ENCODE measurements at regions of chr17 and their contacts with region 1.

Region 1: DNA sequence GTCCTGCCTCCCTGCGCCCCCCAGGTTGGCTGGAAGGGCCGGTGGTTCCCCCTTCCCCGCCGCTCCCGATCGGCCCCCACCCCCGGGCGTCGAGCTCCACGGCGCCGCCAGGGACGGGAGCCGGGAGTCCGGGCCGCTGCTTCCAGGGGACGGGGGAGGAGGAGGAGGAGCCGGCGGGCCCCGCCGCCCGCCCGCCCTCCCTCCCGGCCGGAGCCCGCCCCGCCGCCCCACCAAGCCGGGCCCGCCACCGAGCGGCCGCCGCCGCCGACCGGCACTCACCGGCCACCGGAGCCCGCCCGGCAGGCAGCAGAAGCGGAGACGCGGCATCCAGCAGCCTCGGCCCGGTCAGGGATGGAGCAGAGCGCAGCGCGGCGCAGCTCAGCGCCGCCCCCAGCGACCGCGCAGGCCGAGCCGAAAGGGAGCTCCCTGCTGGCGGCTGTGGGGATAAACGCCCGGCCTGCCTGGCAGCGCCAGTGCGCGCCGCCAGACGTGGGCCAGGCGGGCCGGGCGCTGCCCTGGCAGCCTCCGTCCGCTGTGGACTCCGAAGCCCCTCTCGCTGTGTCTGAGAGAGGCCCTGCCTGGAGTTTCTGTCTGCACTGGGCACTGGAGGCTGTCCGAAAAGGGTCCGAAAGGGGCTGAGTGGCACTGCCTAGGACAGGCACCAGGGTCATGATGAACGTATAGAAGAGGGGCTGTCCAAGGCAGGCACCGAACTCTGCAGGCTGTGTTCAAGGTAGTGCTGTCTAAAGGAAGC is at the start of gene MYO18A:
- DNase-seq: peak; percentile 83
- ATAC-seq: peak; percentile 95
- H3K4me3 Mint-ChIP-seq: peak within 1 kb of the TSS; percentile 58
- H3K27ac Mint-ChIP-seq: no peak within 1 kb of the TSS
- H3K4me1 Mint-ChIP-seq: peaks cover 31% of the 10 kb centered on the region
- H3K27me3 Mint-ChIP-seq: no peaks in the 10 kb centered on the region
- CTCF ChIP-seq: peak; percentile 86
- total RNA-seq, gene MYO18A: 27.5 to 29.4 TPM

Region 2: DNA sequence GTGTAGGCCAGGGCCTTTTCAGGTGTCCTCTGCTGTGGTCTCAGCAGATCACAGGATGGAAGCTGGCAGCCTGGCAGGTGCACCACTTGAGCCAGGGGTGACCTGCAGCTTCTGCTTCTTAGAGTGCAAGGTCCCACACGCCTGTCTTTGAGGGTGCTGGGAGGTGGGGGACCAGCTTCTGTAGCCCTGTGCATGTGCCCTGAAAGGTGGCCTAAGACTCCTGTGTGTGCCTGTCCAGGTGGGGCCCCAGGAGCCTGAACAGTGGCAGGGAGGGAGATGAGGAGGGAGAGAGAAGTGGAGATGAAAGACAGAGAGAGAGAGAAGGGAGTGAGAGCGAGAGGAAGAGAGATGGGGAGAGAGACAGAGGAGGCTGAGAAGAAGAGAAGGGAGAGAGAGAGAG is 1503.0 kb before region 1 on chr17:
- CTCF ChIA-PET with region 1: no interaction called
- POLR2A ChIA-PET with region 1: no interaction called
- intact Hi-C with region 1: no loop called
- DNase-seq: no peak
- ATAC-seq: no peak
- H3K4me3 Mint-ChIP-seq: no peak overlapping the region
- H3K27ac Mint-ChIP-seq: no peak overlapping the region
- H3K4me1 Mint-ChIP-seq: no peaks in the 10 kb centered on the region
- H3K27me3 Mint-ChIP-seq: no peaks in the 10 kb centered on the region
- CTCF ChIP-seq: no peak

Region 3: GRCh38 chr17:29089601-29090044 is 90.6 kb before region 1 on chr17:
- CTCF ChIA-PET with region 1: no interaction called
- POLR2A ChIA-PET with region 1: no interaction called
- intact Hi-C with region 1: no loop called
- DNase-seq: no peak
- ATAC-seq: no peak
- H3K4me3 Mint-ChIP-seq: no peak overlapping the region
- H3K27ac Mint-ChIP-seq: no peak overlapping the region
- H3K4me1 Mint-ChIP-seq: no peaks in the 10 kb centered on the region
- H3K27me3 Mint-ChIP-seq: no peaks in the 10 kb centered on the region
- CTCF ChIP-seq: no peak

Region 4: GRCh38 chr17:29124117-29124924 is 55.9 kb before region 1 on chr17:
- CTCF ChIA-PET with region 1: interaction called, 38 read pairs
- POLR2A ChIA-PET with region 1: interaction called, 5 read pairs
- intact Hi-C with region 1: no loop called
- DNase-seq: peak; percentile 55
- ATAC-seq: peak; percentile 97
- H3K4me3 Mint-ChIP-seq: no peak overlapping the region
- H3K27ac Mint-ChIP-seq: no peak overlapping the region
- H3K4me1 Mint-ChIP-seq: no peaks in the 10 kb centered on the region
- H3K27me3 Mint-ChIP-seq: no peaks in the 10 kb centered on the region
- CTCF ChIP-seq: peak; percentile 76

Region 5: DNA sequence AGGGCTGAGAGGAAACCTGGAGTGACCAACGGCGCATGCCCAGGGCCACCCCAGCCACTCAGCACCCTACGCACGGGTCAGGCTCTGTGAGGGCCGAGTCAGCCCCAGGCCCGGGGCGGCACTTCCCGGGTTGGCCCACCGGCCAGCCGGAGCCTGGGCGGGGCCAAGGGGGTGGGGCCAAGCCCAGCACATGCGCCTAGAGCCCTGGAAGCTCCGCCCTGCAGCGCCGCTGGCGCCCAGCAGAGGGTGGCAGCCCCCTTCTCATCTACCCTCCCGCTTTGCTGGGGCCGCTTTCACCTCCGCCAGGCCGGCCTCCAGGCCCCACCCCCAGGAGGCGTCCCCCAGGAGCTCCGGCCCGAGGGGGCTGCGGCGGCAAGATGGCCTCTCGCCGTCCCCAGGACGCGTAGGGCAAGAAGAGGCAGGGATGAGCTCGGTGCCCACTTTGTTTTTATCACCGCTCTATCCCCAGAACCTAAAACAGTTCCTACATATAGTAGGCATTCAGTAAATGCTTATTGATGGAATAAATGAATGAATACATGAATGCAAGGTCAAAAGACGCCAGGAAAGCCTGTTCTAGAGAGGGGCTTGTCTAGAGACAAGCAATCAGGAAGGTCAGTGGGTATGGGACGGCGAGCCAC is 31.3 kb before region 1 on chr17:
- CTCF ChIA-PET with region 1: interaction called, 355 read pairs
- POLR2A ChIA-PET with region 1: interaction called, 65 read pairs
- intact Hi-C with region 1: loop called (anchors 5 kb)
- DNase-seq: peak; percentile 97
- ATAC-seq: peak; percentile 97
- H3K4me3 Mint-ChIP-seq: peak overlapping the region; percentile 72
- H3K27ac Mint-ChIP-seq: peak overlapping the region; percentile 87
- H3K4me1 Mint-ChIP-seq: peaks cover 54% of the 10 kb centered on the region
- H3K27me3 Mint-ChIP-seq: no peaks in the 10 kb centered on the region
- CTCF ChIP-seq: peak; percentile 93

Region 6: DNA sequence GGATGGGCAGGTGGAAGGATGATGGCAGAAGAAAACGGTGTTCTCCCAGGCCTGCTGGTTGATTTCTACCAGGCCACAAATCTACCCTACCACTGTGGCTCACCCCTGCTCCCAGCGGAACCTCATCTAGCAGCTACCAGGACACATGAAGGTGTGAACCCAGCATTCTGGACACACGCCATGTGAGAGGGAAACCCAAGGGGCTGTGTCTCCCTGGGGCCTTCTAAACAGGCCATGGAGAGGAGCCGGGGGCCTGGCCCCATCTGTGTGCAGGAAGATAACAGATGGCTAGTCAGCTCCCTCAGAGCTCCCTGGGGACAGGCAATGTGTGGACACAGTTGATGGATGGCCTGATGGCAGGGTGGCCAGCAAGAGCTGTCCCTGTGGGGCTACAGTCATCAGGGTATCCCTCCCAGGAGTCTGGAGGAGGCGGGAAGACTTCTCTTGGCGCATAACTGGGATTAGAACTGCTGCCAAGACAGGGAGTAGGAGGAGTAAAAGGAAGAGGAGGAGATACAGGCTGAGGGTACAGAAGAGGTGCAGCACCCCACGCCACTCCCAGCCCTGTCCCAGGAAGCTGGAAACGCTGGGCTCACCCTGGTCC is 17.4 kb before region 1 on chr17:
- CTCF ChIA-PET with region 1: interaction called, 14 read pairs
- POLR2A ChIA-PET with region 1: interaction called, 3 read pairs
- intact Hi-C with region 1: no loop called
- DNase-seq: no peak
- ATAC-seq: no peak
- H3K4me3 Mint-ChIP-seq: no peak overlapping the region
- H3K27ac Mint-ChIP-seq: no peak overlapping the region
- H3K4me1 Mint-ChIP-seq: peaks cover 9% of the 10 kb centered on the region
- H3K27me3 Mint-ChIP-seq: no peaks in the 10 kb centered on the region
- CTCF ChIP-seq: no peak

Region 7: DNA sequence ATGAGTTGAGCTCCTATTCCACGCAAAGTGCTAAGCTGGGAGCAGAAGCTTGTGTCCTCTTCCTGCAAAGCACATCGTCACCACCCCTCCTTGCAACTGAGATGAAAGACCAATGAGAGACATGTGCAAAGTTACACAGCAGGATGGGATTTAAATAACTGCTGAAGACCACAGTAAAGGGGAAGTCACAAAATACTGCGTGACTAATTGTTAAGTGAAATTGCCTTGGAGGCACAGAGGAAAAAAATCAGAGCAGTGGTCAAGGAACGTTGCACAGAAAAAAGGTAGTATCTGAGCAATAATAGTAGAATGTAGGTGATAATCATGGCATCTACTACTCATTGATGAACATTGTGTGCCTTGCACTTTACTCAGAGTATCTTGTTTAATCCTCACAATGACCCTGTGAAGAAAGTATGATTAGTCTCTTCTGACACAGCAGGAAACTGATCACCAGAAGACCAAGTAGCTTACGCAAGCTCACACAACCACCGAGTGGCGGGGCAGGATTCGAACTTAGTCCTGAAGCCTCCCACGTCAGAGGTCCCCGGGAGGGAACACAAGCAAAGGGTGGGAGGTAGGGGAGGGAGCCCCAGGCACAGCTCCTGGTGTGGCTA is 15.4 kb after region 1 on chr17:
- CTCF ChIA-PET with region 1: interaction called, 39 read pairs
- POLR2A ChIA-PET with region 1: interaction called, 5 read pairs
- intact Hi-C with region 1: no loop called
- DNase-seq: peak; percentile 20
- ATAC-seq: peak; percentile 64
- H3K4me3 Mint-ChIP-seq: no peak overlapping the region
- H3K27ac Mint-ChIP-seq: no peak overlapping the region
- H3K4me1 Mint-ChIP-seq: peaks cover 7% of the 10 kb centered on the region
- H3K27me3 Mint-ChIP-seq: peaks cover 6% of the 10 kb centered on the region
- CTCF ChIP-seq: no peak